Activated CD8-positive, alpha-beta T cell treated with anti-CD3 and anti-CD28 coated beads, Interleukin-2, amount 10 ng/mL, durations not matched to agents 7 days and 5 days (primary cell): ENCODE measurements at regions of chr10 and their contacts with region 1.

Region 1: DNA sequence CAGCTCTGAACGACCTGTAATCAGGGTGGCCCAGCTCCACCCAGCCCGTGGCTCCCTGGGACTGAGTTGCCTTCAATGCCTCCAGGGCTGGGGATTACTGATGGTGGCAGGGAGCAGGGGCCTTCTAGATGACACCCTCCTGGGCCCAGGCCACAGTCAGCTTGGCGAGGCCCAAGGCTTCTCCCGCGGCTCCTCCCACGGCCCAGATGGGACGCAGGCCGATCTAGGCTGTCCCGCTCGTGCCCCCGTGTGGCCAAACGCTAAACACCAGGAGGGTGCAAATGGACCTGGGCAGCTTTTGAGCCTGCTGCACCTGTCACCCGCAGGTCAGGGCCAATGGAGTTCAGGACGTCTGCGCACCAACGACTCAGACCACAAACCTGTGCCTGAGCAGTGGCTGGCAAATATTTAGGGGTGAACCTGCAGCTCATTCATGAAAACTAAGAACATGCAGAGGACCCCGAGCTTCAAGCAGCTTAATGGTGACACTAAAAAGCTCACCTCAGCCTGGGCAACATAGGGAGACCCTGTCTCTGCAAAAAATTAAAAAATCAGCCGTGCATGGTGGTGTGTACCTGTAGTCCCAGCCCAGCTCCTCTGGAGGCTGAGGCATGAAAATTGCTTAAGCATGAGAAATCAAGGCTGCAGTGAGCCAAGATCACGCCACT is 43.2 kb downstream of the ASB13 start:
- DNase-seq: peak; percentile 87
- ATAC-seq: peak; percentile 96
- H3K4me3 Mint-ChIP-seq: no peak overlapping the region
- H3K27ac Mint-ChIP-seq: no peak overlapping the region
- H3K4me1 Mint-ChIP-seq: peaks cover 5% of the 10 kb centered on the region
- H3K27me3 Mint-ChIP-seq: no peaks in the 10 kb centered on the region

Region 2: GRCh38 chr10:4813023-4813422 is 810.2 kb before region 1 on chr10:
- CTCF ChIA-PET with region 1: interaction called, 16 read pairs
- POLR2A ChIA-PET with region 1: no interaction called
- DNase-seq: no peak
- ATAC-seq: no peak
- H3K4me3 Mint-ChIP-seq: no peak overlapping the region
- H3K27ac Mint-ChIP-seq: no peak overlapping the region
- H3K4me1 Mint-ChIP-seq: no peaks in the 10 kb centered on the region
- H3K27me3 Mint-ChIP-seq: peaks cover 8% of the 10 kb centered on the region

Region 3: GRCh38 chr10:5446390-5446926 is 176.8 kb before region 1 on chr10:
- CTCF ChIA-PET with region 1: interaction called, 198 read pairs
- POLR2A ChIA-PET with region 1: interaction called, 5 read pairs
- DNase-seq: peak; percentile 80
- ATAC-seq: peak; percentile 72
- H3K4me3 Mint-ChIP-seq: peak overlapping the region; percentile 68
- H3K27ac Mint-ChIP-seq: peak overlapping the region; percentile 62
- H3K4me1 Mint-ChIP-seq: peaks cover 55% of the 10 kb centered on the region
- H3K27me3 Mint-ChIP-seq: no peaks in the 10 kb centered on the region

Region 4: GRCh38 chr10:5538450-5538849 is 84.8 kb before region 1 on chr10:
- CTCF ChIA-PET with region 1: no interaction called
- POLR2A ChIA-PET with region 1: no interaction called
- DNase-seq: no peak
- ATAC-seq: no peak
- H3K4me3 Mint-ChIP-seq: no peak overlapping the region
- H3K27ac Mint-ChIP-seq: no peak overlapping the region
- H3K4me1 Mint-ChIP-seq: no peaks in the 10 kb centered on the region
- H3K27me3 Mint-ChIP-seq: peaks cover 2% of the 10 kb centered on the region

Region 5: DNA sequence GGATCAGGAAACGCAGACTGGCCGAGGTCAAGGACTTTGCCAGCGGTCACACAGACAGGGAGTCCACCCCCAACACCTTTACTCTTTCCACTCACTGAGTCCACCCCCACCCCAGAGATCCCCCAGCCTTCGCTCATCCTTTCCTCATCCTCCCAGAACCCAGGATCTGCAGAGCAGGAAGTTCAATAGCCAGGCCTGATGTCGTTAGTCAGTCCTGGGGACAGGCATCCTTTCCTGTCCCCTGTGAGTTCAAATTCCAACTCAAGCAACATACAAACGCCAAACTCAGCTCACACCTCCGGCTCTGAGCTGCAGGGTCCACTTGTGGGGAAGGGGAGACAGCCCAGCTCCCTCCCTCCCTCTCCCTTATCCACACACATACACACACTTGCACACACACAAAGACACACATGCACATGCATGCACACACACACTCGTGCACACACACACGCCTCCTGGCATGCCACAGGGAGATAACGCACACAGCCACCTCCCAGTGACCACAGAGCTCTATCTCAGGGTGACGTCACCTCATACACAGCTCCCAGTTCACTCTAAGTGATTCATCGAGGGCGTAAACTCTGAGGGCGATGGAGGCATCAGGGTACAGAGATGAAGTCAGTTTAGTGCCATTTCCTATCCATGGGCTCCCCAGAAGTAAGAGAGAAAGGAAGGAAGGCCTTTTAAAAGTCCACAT is 74.5 kb before region 1 on chr10:
- CTCF ChIA-PET with region 1: interaction called, 13 read pairs
- POLR2A ChIA-PET with region 1: no interaction called
- DNase-seq: peak; percentile 76
- ATAC-seq: peak; percentile 89
- H3K4me3 Mint-ChIP-seq: no peak overlapping the region
- H3K27ac Mint-ChIP-seq: no peak overlapping the region
- H3K4me1 Mint-ChIP-seq: peaks cover 29% of the 10 kb centered on the region
- H3K27me3 Mint-ChIP-seq: peaks cover 5% of the 10 kb centered on the region

Region 6: GRCh38 chr10:5559642-5560141 is 63.5 kb before region 1 on chr10:
- CTCF ChIA-PET with region 1: no interaction called
- POLR2A ChIA-PET with region 1: no interaction called
- DNase-seq: no peak
- ATAC-seq: no peak
- H3K4me3 Mint-ChIP-seq: no peak overlapping the region
- H3K27ac Mint-ChIP-seq: no peak overlapping the region
- H3K4me1 Mint-ChIP-seq: peaks cover 7% of the 10 kb centered on the region
- H3K27me3 Mint-ChIP-seq: peaks cover 3% of the 10 kb centered on the region

Region 7: DNA sequence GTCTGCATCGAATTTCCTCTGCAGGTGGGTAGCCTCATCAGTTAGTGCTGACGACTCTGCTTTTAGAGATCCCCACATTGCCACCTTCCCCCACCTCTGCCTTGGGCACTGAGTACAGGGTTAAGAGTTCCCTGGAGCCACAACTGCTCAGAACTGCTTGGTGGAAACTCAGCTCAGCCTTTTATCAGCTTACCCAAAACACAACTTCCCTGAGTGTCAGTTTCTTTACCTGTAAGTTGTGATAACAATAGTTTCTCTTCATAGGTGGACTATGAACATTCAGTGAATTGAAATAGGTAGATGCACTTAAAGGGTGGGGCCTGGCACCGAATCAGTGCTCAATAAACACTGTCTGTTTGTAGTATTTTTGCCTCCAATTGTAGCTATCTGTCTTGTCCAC is 31.9 kb after region 1 on chr10:
- CTCF ChIA-PET with region 1: interaction called, 10 read pairs
- POLR2A ChIA-PET with region 1: no interaction called
- DNase-seq: no peak
- ATAC-seq: no peak
- H3K4me3 Mint-ChIP-seq: no peak overlapping the region
- H3K27ac Mint-ChIP-seq: no peak overlapping the region
- H3K4me1 Mint-ChIP-seq: peaks cover 32% of the 10 kb centered on the region
- H3K27me3 Mint-ChIP-seq: no peaks in the 10 kb centered on the region

Region 8: DNA sequence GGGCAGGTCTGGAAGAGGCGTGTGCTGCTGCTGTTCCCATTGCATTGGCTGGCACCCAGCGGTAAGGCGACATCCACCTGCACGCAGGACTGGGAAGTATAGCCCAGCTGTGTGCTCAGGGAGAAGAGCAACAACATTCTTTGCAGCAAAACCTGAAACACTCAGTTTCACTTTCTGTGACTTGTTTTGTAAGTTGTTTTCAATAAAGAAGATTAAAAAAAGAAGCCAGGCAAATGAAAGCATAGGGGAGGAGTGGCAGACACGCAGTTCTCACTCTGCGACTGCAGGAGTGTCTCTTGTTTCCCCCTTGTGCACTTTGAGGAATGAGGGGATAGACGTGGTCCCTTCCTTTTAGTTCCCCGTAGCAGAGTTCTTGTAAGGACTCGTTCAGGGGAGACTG is 272.6 kb after region 1 on chr10:
- CTCF ChIA-PET with region 1: no interaction called
- POLR2A ChIA-PET with region 1: no interaction called
- DNase-seq: no peak
- ATAC-seq: no peak
- H3K4me3 Mint-ChIP-seq: no peak overlapping the region
- H3K27ac Mint-ChIP-seq: peak overlapping the region; percentile 51
- H3K4me1 Mint-ChIP-seq: peaks cover 47% of the 10 kb centered on the region
- H3K27me3 Mint-ChIP-seq: no peaks in the 10 kb centered on the region